CD4-positive, alpha-beta memory T cell (primary cell): ENCODE measurements at regions of chr19 and their contacts with region 1.

Region 1: GRCh38 chr19:14571695-14572490 is at the start of gene NDUFB7:
- DNase-seq: peak; percentile 91 to 93 (median 93)
- H3K4me3 ChIP-seq: peak within 1 kb of the TSS; percentile 76 to 91
- H3K4me3 Mint-ChIP-seq: peak within 1 kb of the TSS; percentile 95 to 97 (median 96)
- H3K27ac ChIP-seq: peak within 1 kb of the TSS; percentile 68
- H3K27ac Mint-ChIP-seq: peak within 1 kb of the TSS; percentile 89 to 96 (median 93)
- H3K4me1 ChIP-seq: peaks cover 33% of the 10 kb centered on the region
- H3K4me1 Mint-ChIP-seq: peaks cover 16 to 55% (median 43%) of the 10 kb centered on the region in 4 donors
- H3K27me3 ChIP-seq: no peaks in the 10 kb centered on the region
- H3K27me3 Mint-ChIP-seq: no peaks in the 10 kb centered on the region
- total RNA-seq, gene NDUFB7: 56.6 to 67.2 TPM

Region 2: GRCh38 chr19:14890643-14891379 is 318.9 kb after region 1 on chr19:
- CTCF ChIA-PET with region 1: interaction called, 45 read pairs
- POLR2A ChIA-PET with region 1: no interaction called
- intact Hi-C with region 1: no loop called
- DNase-seq: no peak
- H3K4me3 ChIP-seq: no peak overlapping the region
- H3K4me3 Mint-ChIP-seq: no peak overlapping the region
- H3K27ac ChIP-seq: no peak overlapping the region
- H3K27ac Mint-ChIP-seq: no peak overlapping the region
- H3K4me1 ChIP-seq: no peaks in the 10 kb centered on the region
- H3K4me1 Mint-ChIP-seq: peaks cover 0 to 4% (median 3%) of the 10 kb centered on the region in 4 donors
- H3K27me3 ChIP-seq: no peaks in the 10 kb centered on the region
- H3K27me3 Mint-ChIP-seq: peaks cover 25 to 35% of the 10 kb centered on the region in 2 donors